Posterior vena cava (tissue), 2 donors: ENCODE measurements at regions of chr16 and their contacts with region 1.

Region 1: GRCh38 chr16:55465077-55465896 is 13.7 kb upstream of the MMP2 start:
- DNase-seq: peak; percentile 96

Region 2: GRCh38 chr16:55543472-55543871 is 78.2 kb after region 1 on chr16:
- intact Hi-C with region 1: loop called (anchors 2 to 10 kb)
- DNase-seq: no peak

Region 3: GRCh38 chr16:55622930-55623561 is 157.8 kb after region 1 on chr16:
- intact Hi-C with region 1: no loop called
- DNase-seq: no peak

Region 4: DNA sequence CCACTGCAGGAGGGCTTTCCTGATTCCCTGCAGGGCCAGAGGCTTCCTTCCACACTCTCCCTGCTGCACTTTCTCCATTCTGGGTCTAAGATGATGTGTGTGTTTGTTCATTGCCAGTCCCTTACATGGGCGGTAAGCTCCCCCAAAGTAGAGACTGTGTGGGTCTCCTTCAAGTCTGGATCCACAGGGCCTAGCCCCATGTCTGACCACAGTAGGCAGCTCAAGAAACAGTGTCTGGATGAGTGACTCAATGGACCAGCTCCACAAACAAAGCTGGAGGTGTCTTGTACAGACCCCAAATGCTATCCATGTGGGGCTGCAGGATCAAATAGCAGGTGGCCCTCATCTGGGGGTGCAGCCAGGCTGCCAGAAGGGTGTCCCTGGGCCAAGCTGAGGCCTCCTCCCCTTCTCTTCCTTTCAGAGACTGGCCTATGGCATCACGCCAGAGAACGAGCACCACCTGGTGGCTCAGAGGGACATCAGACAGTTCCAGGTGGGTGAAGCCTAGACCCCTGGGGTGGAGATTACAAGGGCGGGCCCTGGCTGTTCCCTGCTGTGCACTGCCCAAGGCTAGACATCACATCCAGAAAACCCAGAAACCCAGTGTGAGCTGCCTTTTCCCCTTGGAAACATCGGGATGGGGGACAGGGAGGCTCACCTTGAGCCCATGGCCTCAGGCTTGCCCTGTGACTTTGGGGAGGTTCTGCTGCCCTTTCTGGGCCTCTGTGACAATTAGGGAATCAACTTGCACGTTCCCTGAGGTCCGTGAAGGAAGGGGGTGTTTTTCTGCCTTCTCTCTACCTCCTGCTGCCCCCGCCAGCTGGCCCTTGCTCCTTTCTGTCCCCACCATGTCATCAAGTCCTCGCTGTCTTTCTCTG is 236.4 kb after region 1 on chr16:
- intact Hi-C with region 1: loop called (anchors 5 kb)
- DNase-seq: peak; percentile 85

Region 5: DNA sequence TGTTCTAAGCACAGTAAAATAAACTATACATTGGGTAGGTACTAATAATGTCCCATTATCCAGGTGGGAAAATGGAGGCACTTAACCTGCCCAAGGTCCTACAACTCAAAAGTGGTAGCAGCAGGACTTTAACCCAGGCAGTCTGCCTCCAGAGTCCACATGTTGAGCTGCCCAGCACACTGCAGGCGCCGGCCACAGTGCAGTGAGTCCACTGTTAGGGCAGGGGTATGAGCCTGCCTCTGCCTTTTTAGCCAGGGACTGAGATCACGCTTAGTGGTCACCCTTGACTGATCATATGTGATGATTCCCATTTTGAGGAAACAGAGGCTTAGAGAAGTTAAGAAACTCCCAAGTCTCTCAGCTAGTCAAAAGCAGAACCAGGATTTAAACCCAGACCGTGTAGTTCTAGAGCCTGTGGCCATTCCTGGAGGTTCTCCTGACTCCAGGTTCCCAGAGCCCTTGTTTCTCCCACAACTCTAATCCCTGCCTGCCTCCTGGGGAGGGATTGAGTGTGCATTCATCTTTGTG is 359.2 kb after region 1 on chr16:
- intact Hi-C with region 1: loop called in 1 of 2 experiments (anchors 10 kb)
- DNase-seq: no peak